Activated B cell treated with CpG ODN at 0.5 μM for 24 hours (primary cell): ENCODE measurements at regions of chr11 and their contacts with region 1.

Region 1: DNA sequence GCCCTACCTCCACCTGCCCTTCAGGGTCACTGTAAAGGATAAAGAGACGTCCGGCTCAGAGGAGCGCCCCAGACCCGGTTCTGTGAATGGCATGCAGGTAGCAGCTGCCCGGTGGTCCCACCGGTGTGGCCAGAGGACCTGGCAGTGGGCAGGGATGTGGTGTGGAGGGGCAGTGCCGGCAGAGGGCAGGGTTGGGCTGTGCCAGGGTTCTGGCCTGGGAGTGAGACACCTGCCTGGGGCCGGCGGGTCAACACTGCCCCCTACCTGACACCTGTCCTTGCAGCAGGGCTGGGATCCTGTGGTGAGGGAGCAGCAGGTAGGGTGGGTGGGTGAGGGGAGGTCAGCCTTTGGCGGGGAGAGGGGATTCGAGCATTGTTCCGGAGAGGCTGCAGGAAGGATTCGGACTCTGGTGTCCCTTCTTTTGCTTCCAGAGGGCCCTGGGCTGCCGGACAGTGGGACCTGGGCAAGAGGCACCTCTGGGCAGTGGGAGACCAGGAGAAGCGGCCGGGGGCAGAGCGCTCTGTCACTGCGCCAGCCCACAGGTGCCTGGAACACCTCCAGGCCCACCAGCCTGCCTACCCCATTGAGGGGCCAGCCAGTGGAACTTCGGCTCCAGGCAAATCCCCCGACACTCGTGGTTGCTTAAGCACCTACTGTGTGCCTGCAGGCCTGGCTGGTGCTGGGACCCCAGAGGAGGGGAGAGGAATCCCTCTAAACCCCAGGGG is 1.6 kb upstream of the PHLDA2 start:
- DNase-seq: peak; percentile 40
- ATAC-seq: peak; percentile 44
- H3K4me3 Mint-ChIP-seq: peak overlapping the region; percentile 82
- H3K27ac Mint-ChIP-seq: no peak overlapping the region
- H3K4me1 Mint-ChIP-seq: peaks cover 15% of the 10 kb centered on the region
- H3K27me3 Mint-ChIP-seq: peaks cover 23% of the 10 kb centered on the region
- CTCF ChIP-seq: no peak

Region 2: GRCh38 chr11:2428322-2428795 is 502.5 kb before region 1 on chr11:
- CTCF ChIA-PET with region 1: no interaction called
- POLR2A ChIA-PET with region 1: no interaction called
- intact Hi-C with region 1: loop called (anchors 1 kb)
- DNase-seq: peak; percentile 76
- ATAC-seq: peak; percentile 97
- H3K4me3 Mint-ChIP-seq: no peak overlapping the region
- H3K27ac Mint-ChIP-seq: no peak overlapping the region
- H3K4me1 Mint-ChIP-seq: no peaks in the 10 kb centered on the region
- H3K27me3 Mint-ChIP-seq: no peaks in the 10 kb centered on the region
- CTCF ChIP-seq: peak; percentile 57

Region 3: DNA sequence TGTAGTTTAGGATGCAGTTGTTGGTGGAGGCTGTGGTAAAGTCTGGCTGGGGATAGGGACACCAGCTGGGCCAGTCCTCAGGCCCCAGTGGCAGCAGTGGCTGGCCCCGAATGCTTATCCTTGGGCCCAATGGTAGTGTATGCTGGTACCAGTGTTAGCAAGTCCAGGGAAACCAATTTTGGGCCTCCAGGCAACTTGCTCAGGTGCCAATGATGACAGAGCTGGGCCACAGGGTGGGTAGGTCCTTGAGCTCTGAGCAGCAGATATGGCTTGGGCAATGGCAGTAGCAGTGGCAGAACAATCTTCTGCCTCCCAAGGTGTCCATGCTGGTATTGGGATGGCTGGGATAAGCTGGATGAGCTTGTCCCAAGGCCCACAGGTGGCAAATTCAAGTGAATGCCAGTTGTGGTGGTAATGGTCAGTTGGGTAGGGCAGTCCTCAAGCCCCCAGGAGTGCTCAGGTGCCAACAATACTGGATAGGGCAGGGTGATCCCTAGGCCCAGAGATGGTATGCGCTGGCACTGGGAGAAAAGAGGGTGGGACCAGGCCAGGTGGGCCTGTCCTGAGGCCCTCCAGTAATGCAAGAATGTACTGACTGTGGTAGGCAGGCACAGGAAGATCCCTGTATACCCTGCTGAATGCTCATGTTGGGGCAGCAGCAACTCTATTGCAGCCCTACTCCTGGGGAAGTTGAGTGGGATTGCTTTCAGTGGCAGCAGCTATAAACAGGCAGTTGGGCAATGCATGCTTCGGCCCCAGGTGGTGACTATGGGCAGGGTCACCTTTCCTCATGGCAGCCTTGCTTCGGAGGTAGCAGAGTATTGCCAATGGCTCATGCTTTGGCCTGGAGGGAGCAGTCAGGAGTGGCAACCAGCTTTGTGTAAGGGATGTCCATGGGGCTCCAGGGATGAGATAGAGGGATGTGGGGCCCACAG is 285.8 kb before region 1 on chr11:
- CTCF ChIA-PET with region 1: no interaction called
- POLR2A ChIA-PET with region 1: no interaction called
- intact Hi-C with region 1: no loop called
- DNase-seq: no peak
- ATAC-seq: no peak
- H3K4me3 Mint-ChIP-seq: no peak overlapping the region
- H3K27ac Mint-ChIP-seq: no peak overlapping the region
- H3K4me1 Mint-ChIP-seq: no peaks in the 10 kb centered on the region
- H3K27me3 Mint-ChIP-seq: no peaks in the 10 kb centered on the region
- CTCF ChIP-seq: no peak

Region 4: DNA sequence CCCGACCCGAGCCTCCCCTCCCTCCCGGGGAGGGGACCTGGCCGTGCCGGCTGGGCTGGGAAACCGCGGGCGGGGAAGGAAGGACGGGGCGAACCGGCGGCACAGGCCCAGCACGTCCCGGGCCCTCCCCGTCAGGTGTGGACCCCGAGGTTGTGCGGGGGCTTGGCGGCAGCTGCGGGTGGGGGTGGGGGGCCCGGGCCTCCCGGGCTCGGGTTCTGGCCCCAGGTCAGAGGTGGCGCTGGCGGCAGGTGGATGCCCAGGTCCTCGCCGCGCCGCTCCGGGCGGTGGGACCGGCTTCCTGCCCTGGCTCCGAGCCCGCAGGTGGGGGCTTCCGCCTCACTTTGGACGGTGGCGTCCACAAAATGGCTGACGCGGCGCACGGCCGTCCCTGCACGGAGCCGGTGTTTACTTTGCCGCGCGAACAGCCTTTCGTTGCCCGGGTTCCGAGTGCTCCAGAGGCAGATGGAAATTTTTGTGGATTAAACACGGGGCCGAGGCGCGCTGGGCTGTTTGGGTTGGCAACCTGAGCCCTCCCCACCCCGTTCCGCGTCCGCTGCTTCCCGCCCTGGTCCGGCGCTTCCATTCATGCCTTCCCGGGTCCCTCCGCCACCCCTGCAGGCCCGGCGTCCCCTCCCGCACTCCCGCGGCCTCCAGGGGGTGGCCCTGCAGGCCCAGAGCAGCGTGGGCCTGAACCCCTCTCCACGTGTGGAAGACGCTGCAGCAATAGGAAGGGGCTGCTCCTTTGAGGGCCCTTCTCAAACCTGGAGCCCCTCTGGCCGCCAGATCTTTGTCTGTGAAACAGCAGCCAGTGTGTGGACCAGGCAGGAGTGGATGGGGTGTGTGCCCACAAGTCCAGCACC is 139.1 kb before region 1 on chr11:
- CTCF ChIA-PET with region 1: no interaction called
- POLR2A ChIA-PET with region 1: no interaction called
- intact Hi-C with region 1: no loop called
- DNase-seq: peak; percentile 31
- ATAC-seq: peak; percentile 85
- H3K4me3 Mint-ChIP-seq: peak overlapping the region; percentile 79
- H3K27ac Mint-ChIP-seq: peak overlapping the region; percentile 18
- H3K4me1 Mint-ChIP-seq: peaks cover 8% of the 10 kb centered on the region
- H3K27me3 Mint-ChIP-seq: peaks cover 2% of the 10 kb centered on the region
- CTCF ChIP-seq: no peak

Region 5: GRCh38 chr11:2892215-2893020 is 38.4 kb before region 1 on chr11:
- CTCF ChIA-PET with region 1: interaction called, 10 read pairs
- POLR2A ChIA-PET with region 1: interaction called, 3 read pairs
- intact Hi-C with region 1: loop called (anchors 2 kb)
- DNase-seq: peak; percentile 61
- ATAC-seq: peak; percentile 68
- H3K4me3 Mint-ChIP-seq: peak overlapping the region; percentile 72
- H3K27ac Mint-ChIP-seq: no peak overlapping the region
- H3K4me1 Mint-ChIP-seq: peaks cover 15% of the 10 kb centered on the region
- H3K27me3 Mint-ChIP-seq: no peaks in the 10 kb centered on the region
- CTCF ChIP-seq: peak; percentile 74

Region 6: DNA sequence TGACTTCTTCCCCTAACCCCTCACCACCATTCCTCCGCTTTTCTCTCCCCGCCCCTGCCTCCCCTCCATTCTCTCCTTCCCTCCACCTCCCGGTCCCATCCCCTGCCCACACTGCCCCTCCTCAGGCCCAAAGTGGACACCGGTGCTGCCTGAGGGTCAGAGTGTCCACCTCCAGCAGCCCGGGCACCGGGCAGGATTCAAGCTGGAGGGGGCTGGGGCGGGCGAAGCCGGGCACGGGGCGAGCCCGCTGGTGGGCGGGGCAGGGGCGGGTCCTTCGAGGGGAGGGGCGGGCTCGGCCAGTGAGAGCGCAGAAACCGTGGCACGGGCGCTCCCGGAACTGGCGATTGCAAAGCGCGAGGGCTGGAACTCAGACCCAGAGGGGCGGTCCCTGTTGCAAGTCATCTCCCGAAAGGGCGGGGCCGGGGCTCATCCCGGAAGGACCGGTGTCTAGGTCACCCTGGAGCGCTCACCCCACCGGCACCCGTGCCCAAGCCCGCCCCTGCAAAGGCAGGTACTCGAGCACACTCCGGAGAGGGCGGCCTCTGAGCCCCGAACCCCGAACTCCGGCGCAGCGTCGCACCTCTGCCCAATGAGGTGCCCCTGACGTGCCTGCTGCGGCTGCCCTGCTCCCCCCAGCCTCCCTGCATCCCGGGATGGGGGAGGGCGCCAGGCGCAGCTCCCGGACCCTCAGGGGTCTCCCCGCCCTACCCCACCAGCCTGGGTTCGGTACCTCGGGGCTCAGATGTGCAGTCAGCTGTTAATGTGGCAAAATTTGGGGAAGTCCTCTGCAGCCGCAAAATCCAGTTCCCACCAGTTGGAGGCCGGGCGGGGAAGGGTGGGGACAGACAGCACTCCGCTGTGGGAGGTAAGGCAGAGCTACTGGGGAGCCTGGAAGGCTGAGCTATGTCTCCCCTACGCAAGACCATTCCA is 28.7 kb before region 1 on chr11:
- CTCF ChIA-PET with region 1: interaction called, 3 read pairs
- POLR2A ChIA-PET with region 1: interaction called, 14 read pairs
- intact Hi-C with region 1: loop called (anchors 1 kb)
- DNase-seq: peak; percentile 80
- ATAC-seq: peak; percentile 97
- H3K4me3 Mint-ChIP-seq: peak overlapping the region; percentile 80
- H3K27ac Mint-ChIP-seq: peak overlapping the region; percentile 24
- H3K4me1 Mint-ChIP-seq: peaks cover 28% of the 10 kb centered on the region
- H3K27me3 Mint-ChIP-seq: no peaks in the 10 kb centered on the region
- CTCF ChIP-seq: no peak

Region 7: DNA sequence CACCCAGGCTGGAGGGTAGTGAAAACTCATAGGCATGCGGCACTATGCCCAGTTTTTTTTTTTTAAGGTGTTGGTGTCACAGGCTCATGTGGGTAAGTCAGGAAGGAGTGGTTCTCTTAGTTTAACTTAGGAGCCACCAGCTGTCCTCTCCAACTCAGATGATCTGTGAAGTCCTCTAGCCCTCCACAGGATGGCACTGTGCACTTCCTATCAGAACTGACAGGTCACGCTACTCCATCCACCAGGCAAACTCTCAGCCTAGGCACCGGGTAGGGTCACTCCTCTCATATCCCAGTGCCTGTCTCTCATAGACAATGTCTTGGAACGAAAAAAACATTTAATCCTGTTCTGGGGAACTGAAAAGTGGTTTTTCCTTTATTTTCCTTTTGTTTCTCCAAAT is 44.7 kb after region 1 on chr11:
- CTCF ChIA-PET with region 1: no interaction called
- POLR2A ChIA-PET with region 1: no interaction called
- intact Hi-C with region 1: no loop called
- DNase-seq: no peak
- ATAC-seq: peak; percentile 52
- H3K4me3 Mint-ChIP-seq: no peak overlapping the region
- H3K27ac Mint-ChIP-seq: no peak overlapping the region
- H3K4me1 Mint-ChIP-seq: peaks cover 2% of the 10 kb centered on the region
- H3K27me3 Mint-ChIP-seq: no peaks in the 10 kb centered on the region
- CTCF ChIP-seq: no peak